Heart left ventricle (tissue), 16 donors: ENCODE measurements at regions of chr1 and their contacts with region 1.

Region 1: GRCh38 chr1:35769759-35770446 is at the start of gene CLSPN:
- DNase-seq: peak; percentile 95 to 96 (median 96)
- ATAC-seq: peak; percentile 99 to 100 (median 99)
- H3K4me3 ChIP-seq: peak within 1 kb of the TSS; percentile 59 to 97 (median 86)
- H3K27ac ChIP-seq: peak within 1 kb of the TSS in 11 of 12 donors; percentile 39 to 91 (median 77)
- H3K4me1 ChIP-seq: peaks cover 0 to 18% (median 4%) of the 10 kb centered on the region in 12 donors
- H3K27me3 ChIP-seq: no peaks in the 10 kb centered on the region
- CTCF ChIP-seq: no peak
- POLR2A ChIP-seq: peak in 1 of 2 donors; percentile 31
- total RNA-seq, gene CLSPN: 0.22 to 6.3 (median 0.35) TPM

Region 2: DNA sequence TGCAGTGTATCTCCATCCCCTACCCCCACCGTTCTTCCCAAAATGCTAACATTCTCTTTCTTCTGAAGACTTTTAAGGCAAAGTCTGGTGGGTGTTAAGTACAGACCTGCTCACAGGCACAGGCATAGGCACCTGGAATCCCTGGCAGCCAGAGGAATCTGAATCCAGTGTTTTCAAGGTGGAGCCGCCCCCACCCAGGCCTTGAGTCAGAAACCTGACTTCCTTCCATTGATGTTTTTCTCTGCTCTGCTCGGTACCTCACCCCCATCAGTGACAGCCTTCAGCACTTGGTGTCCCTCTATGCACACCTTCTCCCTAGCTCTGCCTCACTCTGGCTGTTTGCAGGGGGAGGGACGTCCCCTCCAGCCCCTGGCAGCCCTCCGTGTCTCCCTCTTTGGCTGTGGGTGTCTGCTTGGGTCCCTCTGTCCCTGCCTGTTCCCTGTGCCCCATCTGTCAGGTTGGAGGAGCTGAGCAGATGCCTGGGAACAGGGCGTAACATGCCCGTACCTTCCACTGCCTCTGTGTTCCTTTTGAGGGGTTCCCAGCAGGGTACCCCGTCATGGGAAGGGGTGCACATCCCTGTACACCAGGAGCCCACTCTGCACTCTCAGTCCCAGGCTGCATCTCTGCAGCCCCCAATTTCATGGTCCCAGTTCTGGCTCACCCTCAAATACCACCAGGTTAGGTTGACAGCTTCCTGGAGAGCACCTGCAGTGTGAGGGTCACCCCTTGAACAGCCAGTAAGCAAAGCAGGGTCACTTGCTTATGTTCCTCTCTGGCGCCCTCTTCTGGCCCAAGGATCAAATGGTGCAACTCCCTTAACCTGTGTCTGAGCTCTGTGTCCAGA is 205.6 kb before region 1 on chr1:
- intact Hi-C with region 1: loop called in 8 of 10 experiments (anchors 1 to 5 kb)
- DNase-seq: peak; percentile 72 to 87 (median 78)
- ATAC-seq: peak in 3 of 4 donors; percentile 29 to 49 (median 43)
- H3K4me3 ChIP-seq: no peak overlapping the region
- H3K27ac ChIP-seq: no peak overlapping the region
- H3K4me1 ChIP-seq: peaks cover 0 to 28% (median 11%) of the 10 kb centered on the region in 12 donors
- H3K27me3 ChIP-seq: peaks cover 0 to 1% (median 0%) of the 10 kb centered on the region in 9 donors
- CTCF ChIP-seq: peak; percentile 59 to 85 (median 78)
- POLR2A ChIP-seq: no peak

Region 3: DNA sequence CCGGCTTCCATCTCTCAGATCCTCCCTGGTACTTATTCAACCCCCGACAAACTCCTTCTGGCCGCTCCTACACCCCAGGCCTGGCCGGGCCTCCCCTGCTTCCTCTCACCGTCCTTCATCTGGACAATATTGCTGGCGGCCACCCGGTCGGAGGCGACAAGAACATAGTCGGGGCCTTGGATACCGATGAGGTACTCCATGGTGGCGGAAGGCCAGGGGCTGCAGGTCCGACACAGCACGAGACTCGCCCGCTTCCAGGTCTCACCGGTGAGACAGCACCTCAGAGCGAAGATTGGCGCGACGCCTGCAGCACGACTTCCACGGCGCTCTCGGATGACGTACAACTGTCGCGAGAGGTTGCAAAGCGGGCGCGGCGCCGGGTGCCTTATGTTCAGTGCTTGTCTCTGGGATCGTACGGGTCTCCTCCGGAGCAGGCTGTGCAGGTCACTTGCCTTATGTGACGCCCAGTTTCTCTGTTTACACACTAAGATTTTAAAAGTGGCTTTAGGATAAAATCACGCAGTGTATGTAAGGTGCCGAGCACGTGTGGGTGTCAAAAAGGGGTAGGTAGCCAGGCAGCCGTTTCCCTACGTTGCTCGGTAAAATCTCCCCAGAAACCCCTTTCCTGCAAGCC is 128.6 kb before region 1 on chr1 and contains the start of gene PSMB2:
- intact Hi-C with region 1: loop called in 1 of 10 experiments (anchors 2 kb)
- DNase-seq: peak; percentile 94 to 97 (median 95)
- ATAC-seq: peak; percentile 96 to 98 (median 98)
- H3K4me3 ChIP-seq: peak within 1 kb of the TSS; percentile 69 to 96 (median 82)
- H3K27ac ChIP-seq: peak within 1 kb of the TSS; percentile 69 to 95 (median 88)
- H3K4me1 ChIP-seq: peaks cover 0 to 50% (median 39%) of the 10 kb centered on the region in 12 donors
- H3K27me3 ChIP-seq: peaks cover 0 to 16% (median 0%) of the 10 kb centered on the region in 9 donors
- CTCF ChIP-seq: peak in 1 of 12 donors; percentile 8
- POLR2A ChIP-seq: peak in 1 of 2 donors; percentile 61
- total RNA-seq, gene PSMB2: 36.3 to 60.0 (median 41.7) TPM

Region 4: DNA sequence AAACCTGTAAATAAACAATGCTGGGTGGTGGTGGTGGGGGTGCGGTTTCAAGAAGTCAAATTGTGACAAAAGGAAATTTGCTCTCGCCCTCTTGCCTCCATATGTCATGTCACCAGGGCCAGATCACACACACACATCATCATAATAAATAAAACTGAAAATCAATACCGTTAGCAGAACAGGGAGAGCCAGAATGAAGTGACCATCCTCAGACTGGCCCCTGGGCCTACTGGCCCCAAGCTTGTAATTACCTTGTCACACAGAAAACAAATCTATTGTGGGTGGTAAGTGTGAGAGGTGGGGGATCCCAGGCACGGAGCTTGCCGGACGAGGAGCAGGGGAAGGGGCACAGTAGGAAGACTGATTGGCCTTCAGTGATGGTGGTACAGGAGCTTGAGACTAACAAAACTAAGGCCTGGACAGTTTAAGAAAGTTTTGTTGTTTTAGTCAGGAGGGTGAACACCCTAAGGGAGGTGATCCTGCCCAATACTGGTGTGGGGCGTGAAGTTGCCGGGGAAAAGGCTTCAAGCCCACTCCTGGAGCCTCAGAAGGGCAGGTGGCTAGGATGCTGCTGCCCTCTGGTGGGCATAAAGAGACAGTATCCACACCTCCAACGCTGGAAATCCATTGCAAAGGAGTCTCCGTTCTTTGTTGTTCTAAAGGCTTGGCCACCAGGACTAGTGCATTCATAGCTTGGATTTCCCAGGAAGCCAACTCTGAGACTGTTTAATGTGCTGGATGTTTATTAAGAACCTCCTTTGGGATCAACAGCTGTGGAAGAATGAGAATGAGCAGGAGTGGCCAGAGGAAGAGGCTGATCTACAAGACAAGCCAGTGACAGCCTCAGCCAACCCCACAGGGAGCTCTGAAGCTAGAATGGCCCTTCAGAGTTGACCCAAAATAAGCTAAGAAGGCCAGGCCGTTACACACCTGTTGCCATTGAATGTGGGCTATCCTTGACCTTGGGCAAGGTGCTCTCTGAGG is 43.2 kb before region 1 on chr1:
- intact Hi-C with region 1: loop called in 1 of 10 experiments (anchors 5 kb)
- DNase-seq: peak in 4 of 5 donors; percentile 36 to 56 (median 40)
- ATAC-seq: peak; percentile 77 to 92 (median 87)
- H3K4me3 ChIP-seq: no peak overlapping the region
- H3K27ac ChIP-seq: no peak overlapping the region
- H3K4me1 ChIP-seq: peaks cover 0 to 3% (median 0%) of the 10 kb centered on the region in 12 donors
- H3K27me3 ChIP-seq: no peaks in the 10 kb centered on the region
- CTCF ChIP-seq: peak; percentile 79 to 95 (median 85)
- POLR2A ChIP-seq: no peak